IMR-90 (cell line): ENCODE measurements at regions of chr2 and their contacts with region 1.

Region 1: GRCh38 chr2:38554973-38555595 is 47.6 kb downstream of the HNRNPLL start:
- DNase-seq: peak; percentile 33
- ATAC-seq: peak; percentile 70
- H3K4me3 ChIP-seq: no peak overlapping the region
- H3K27ac ChIP-seq: no peak overlapping the region
- H3K4me1 ChIP-seq: no peaks in the 10 kb centered on the region
- H3K27me3 ChIP-seq: no peaks in the 10 kb centered on the region
- CTCF ChIP-seq: peak; percentile 46
- POLR2A ChIP-seq: no peak
- RAD21 ChIP-seq: no peak; the same call in 1 of the 2 replicates

Region 2: GRCh38 chr2:38766866-38767534 is 211.9 kb after region 1 on chr2:
- CTCF ChIA-PET with region 1: no interaction called
- POLR2A ChIA-PET with region 1: interaction called, 14 read pairs
- dilution Hi-C with region 1: no loop called
- in situ Hi-C with region 1: no loop called
- intact Hi-C with region 1: no loop called
- DNase-seq: peak; percentile 29
- ATAC-seq: peak; percentile 30
- H3K4me3 ChIP-seq: no peak overlapping the region
- H3K27ac ChIP-seq: no peak overlapping the region
- H3K4me1 ChIP-seq: peaks cover 9% of the 10 kb centered on the region
- H3K27me3 ChIP-seq: no peaks in the 10 kb centered on the region
- CTCF ChIP-seq: no peak
- POLR2A ChIP-seq: no peak
- RAD21 ChIP-seq: no peak